ENCODE measurements at regions of chr3 and their contacts with region 1.

Region 1: GRCh38 chr3:124688581-124689454 is 41.4 kb upstream of the UMPS start:
- DNase-seq: peak; percentile 76
- ATAC-seq: peak; percentile 86
- H3K4me3 ChIP-seq: no peak overlapping the region
- H3K27ac ChIP-seq: peak overlapping the region; percentile 65
- H3K4me1 ChIP-seq: peaks cover 64% of the 10 kb centered on the region
- H3K27me3 ChIP-seq: no peaks in the 10 kb centered on the region
- CTCF ChIP-seq: peak; percentile 90
- EP300 ChIP-seq: no peak
- POLR2A ChIP-seq: no peak
- RAD21 ChIP-seq: peak; percentile 84

Region 2: GRCh38 chr3:124351430-124352148 is 337.2 kb before region 1 on chr3:
- CTCF ChIA-PET with region 1: no interaction called
- POLR2A ChIA-PET with region 1: no interaction called
- in situ Hi-C with region 1: loop called (anchors 25 kb)
- intact Hi-C with region 1: no loop called
- DNase-seq: peak; percentile 39
- ATAC-seq: peak; percentile 80
- H3K4me3 ChIP-seq: no peak overlapping the region
- H3K27ac ChIP-seq: no peak overlapping the region
- H3K4me1 ChIP-seq: no peaks in the 10 kb centered on the region
- H3K27me3 ChIP-seq: no peaks in the 10 kb centered on the region
- CTCF ChIP-seq: peak; percentile 61
- EP300 ChIP-seq: no peak
- POLR2A ChIP-seq: no peak
- RAD21 ChIP-seq: no peak

Region 3: DNA sequence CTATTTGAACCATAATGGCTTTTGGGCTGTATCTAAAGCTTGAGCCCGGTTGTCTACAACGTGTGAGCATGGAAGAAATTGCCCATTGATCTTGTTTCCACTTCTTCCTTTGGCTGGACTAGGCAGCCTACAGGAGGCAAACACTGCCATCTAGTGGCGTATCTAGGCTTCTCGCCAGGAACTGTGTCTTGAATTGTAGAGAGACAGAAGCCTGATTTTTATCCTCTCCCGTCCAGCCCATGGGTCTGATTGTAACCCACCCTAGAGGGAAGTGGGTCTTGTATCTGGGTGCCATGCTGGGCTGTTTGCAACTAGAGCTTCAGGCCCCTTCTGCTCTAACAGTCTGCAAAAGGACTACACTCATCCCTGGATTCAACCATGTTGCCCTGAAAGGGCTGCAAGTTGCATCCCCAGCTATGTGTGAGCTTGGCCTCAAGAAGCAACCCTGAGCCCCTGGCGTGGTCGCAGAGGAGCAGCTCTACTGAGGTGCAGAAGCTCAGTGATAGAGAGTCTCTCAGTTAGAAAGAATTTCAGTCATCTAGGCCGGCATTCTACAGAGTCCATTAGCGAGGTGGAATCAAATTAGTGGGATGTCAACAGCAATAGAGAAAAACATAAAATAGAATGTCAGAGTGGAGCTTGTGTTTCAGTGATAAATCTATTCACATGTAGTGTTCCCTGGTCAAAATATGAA is 128.8 kb before region 1 on chr3:
- CTCF ChIA-PET with region 1: interaction called, 60 read pairs
- POLR2A ChIA-PET with region 1: interaction called, 3 read pairs
- in situ Hi-C with region 1: loop called (anchors 5 kb)
- intact Hi-C with region 1: loop called (anchors 1 kb)
- DNase-seq: peak; percentile 60
- ATAC-seq: peak; percentile 85
- H3K4me3 ChIP-seq: no peak overlapping the region
- H3K27ac ChIP-seq: no peak overlapping the region
- H3K4me1 ChIP-seq: peaks cover 6% of the 10 kb centered on the region
- H3K27me3 ChIP-seq: peaks cover 0 to 41% of the 10 kb centered on the region in 2 experiments; a peak in 3 of 5 replicates
- CTCF ChIP-seq: peak; percentile 92
- EP300 ChIP-seq: no peak
- POLR2A ChIP-seq: no peak
- RAD21 ChIP-seq: peak; percentile 83

Region 4: GRCh38 chr3:124634210-124635168 is 54.3 kb before region 1 on chr3:
- CTCF ChIA-PET with region 1: no interaction called
- POLR2A ChIA-PET with region 1: interaction called, 11 read pairs
- in situ Hi-C with region 1: no loop called
- intact Hi-C with region 1: loop called (anchors 2 kb)
- DNase-seq: peak; percentile 79
- ATAC-seq: peak; percentile 78
- H3K4me3 ChIP-seq: peak overlapping the region in 2 of 3 experiments; percentile 5 to 29; a peak in 3 of 6 replicates
- H3K27ac ChIP-seq: peak overlapping the region; percentile 76
- H3K4me1 ChIP-seq: peaks cover 69% of the 10 kb centered on the region
- H3K27me3 ChIP-seq: no peaks in the 10 kb centered on the region
- CTCF ChIP-seq: no peak
- EP300 ChIP-seq: no peak; a peak in 1 of 4 replicates
- POLR2A ChIP-seq: no peak
- RAD21 ChIP-seq: no peak

Region 5: GRCh38 chr3:124650798-124651197 is 38.0 kb before region 1 on chr3:
- CTCF ChIA-PET with region 1: no interaction called
- POLR2A ChIA-PET with region 1: no interaction called
- in situ Hi-C with region 1: no loop called
- intact Hi-C with region 1: loop called (anchors 2 kb)
- DNase-seq: no peak
- ATAC-seq: no peak
- H3K4me3 ChIP-seq: no peak overlapping the region
- H3K27ac ChIP-seq: no peak overlapping the region
- H3K4me1 ChIP-seq: peaks cover 36% of the 10 kb centered on the region
- H3K27me3 ChIP-seq: no peaks in the 10 kb centered on the region
- CTCF ChIP-seq: no peak
- EP300 ChIP-seq: no peak
- POLR2A ChIP-seq: no peak
- RAD21 ChIP-seq: no peak

Region 6: DNA sequence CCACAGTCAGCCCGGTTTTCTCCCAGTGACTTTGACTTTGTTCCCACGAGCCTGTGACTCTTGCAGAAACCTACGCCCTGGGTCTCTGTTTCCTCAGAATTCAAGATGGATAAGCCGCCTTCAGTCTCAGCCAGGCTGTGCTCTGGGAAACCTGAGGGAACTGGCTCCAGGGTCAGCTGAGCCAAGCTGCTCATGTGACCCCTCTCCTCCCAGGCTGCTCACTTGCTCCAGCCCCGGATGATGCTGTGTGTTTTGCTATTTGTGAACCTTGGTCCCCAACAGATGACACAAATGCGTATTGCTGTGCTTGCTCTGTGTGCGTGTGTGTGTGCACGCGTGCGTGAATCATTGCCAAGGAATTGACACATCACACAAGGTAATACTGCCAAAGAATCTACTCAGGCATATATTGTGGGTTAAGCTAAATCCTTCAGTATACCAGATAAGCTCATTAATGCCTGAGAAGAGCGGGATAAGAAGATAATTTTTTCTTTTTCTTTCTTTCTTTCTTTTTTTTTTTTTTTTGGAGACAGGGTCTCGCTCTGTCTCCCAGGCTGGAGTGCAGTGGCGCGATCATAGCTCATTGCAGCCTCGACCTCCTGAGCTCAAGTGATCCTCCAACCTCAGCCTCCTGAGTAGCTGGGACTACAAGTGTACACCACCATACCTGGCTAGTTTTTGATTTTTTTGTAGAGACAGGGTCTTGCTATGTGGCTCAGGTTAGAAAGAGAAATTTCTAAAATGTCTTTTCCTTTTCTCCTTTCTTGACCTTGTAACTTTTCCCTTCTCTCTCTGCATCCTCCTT is 12.3 kb after region 1 on chr3:
- CTCF ChIA-PET with region 1: no interaction called
- POLR2A ChIA-PET with region 1: interaction called, 35 read pairs
- in situ Hi-C with region 1: no loop called
- intact Hi-C with region 1: loop called (anchors 1 kb)
- DNase-seq: peak; percentile 99
- ATAC-seq: peak; percentile 91
- H3K4me3 ChIP-seq: peak overlapping the region; percentile 48 to 76 (median 64)
- H3K27ac ChIP-seq: peak overlapping the region; percentile 98
- H3K4me1 ChIP-seq: peaks cover 67% of the 10 kb centered on the region
- H3K27me3 ChIP-seq: no peaks in the 10 kb centered on the region; a peak in 1 of 5 replicates
- CTCF ChIP-seq: no peak; the same call in 1 of the 2 replicates
- EP300 ChIP-seq: peak; percentile 80 to 85
- POLR2A ChIP-seq: peak; percentile 90 to 91
- RAD21 ChIP-seq: peak; percentile 36; the same call in 1 of the 2 replicates

Region 7: GRCh38 chr3:124730129-124730940 is 41.5 kb after region 1 on chr3 and contains the start of gene UMPS:
- CTCF ChIA-PET with region 1: interaction called, 3 read pairs
- POLR2A ChIA-PET with region 1: interaction called, 21 read pairs
- in situ Hi-C with region 1: loop called (anchors 5 kb)
- intact Hi-C with region 1: loop called (anchors 2 kb)
- DNase-seq: peak; percentile 83
- ATAC-seq: peak; percentile 96
- H3K4me3 ChIP-seq: peak within 1 kb of the TSS; percentile 75 to 92 (median 88)
- H3K27ac ChIP-seq: peak within 1 kb of the TSS; percentile 98
- H3K4me1 ChIP-seq: peaks cover 43% of the 10 kb centered on the region
- H3K27me3 ChIP-seq: no peaks in the 10 kb centered on the region; a peak in 1 of 5 replicates
- CTCF ChIP-seq: peak; percentile 8; the same call in 1 of the 2 replicates
- EP300 ChIP-seq: peak; percentile 30 to 46; a peak in 2 of 4 replicates
- POLR2A ChIP-seq: peak; percentile 92
- RAD21 ChIP-seq: peak; percentile 50; the same call in 1 of the 2 replicates
- total RNA-seq, gene UMPS: 74.2 and 117 TPM in 2 replicates